Vagina (tissue), 2 donors: ENCODE measurements at regions of chr3 and their contacts with region 1.

Region 1: GRCh38 chr3:8622873-8623691 is 21.5 kb downstream of the SSUH2 start:
- DNase-seq: no peak
- H3K4me3 ChIP-seq: no peak overlapping the region
- H3K27ac ChIP-seq: no peak overlapping the region
- H3K4me1 ChIP-seq: peaks cover 11% of the 10 kb centered on the region
- H3K27me3 ChIP-seq: no peaks in the 10 kb centered on the region
- CTCF ChIP-seq: peak; percentile 81 to 94 (median 91)
- POLR2A ChIP-seq: no peak

Region 2: GRCh38 chr3:6686691-6687090 is 1936.4 kb before region 1 on chr3:
- intact Hi-C with region 1: no loop called
- DNase-seq: no peak
- H3K4me3 ChIP-seq: no peak overlapping the region
- H3K27ac ChIP-seq: no peak overlapping the region
- H3K4me1 ChIP-seq: no peaks in the 10 kb centered on the region
- H3K27me3 ChIP-seq: no peaks in the 10 kb centered on the region
- CTCF ChIP-seq: no peak
- POLR2A ChIP-seq: no peak

Region 3: GRCh38 chr3:8441969-8442559 is 181.0 kb before region 1 on chr3:
- intact Hi-C with region 1: loop called (anchors 5 kb)
- DNase-seq: no peak
- H3K4me3 ChIP-seq: no peak overlapping the region
- H3K27ac ChIP-seq: no peak overlapping the region
- H3K4me1 ChIP-seq: peaks cover 34% of the 10 kb centered on the region
- H3K27me3 ChIP-seq: no peaks in the 10 kb centered on the region
- CTCF ChIP-seq: peak; percentile 16 to 71 (median 67)
- POLR2A ChIP-seq: no peak

Region 4: GRCh38 chr3:9915254-9916141 is 1292.4 kb after region 1 on chr3:
- intact Hi-C with region 1: no loop called
- DNase-seq: peak in 1 of 2 donors; percentile 89
- H3K4me3 ChIP-seq: peak overlapping the region; percentile 58 to 76
- H3K27ac ChIP-seq: peak overlapping the region; percentile 90
- H3K4me1 ChIP-seq: peaks cover 61% of the 10 kb centered on the region
- H3K27me3 ChIP-seq: no peaks in the 10 kb centered on the region
- CTCF ChIP-seq: peak in 1 of 3 experiments; percentile 33
- POLR2A ChIP-seq: peak in 1 of 2 donors; percentile 7